ENCODE measurements at regions of chr19 and their contacts with region 1.

Region 1: DNA sequence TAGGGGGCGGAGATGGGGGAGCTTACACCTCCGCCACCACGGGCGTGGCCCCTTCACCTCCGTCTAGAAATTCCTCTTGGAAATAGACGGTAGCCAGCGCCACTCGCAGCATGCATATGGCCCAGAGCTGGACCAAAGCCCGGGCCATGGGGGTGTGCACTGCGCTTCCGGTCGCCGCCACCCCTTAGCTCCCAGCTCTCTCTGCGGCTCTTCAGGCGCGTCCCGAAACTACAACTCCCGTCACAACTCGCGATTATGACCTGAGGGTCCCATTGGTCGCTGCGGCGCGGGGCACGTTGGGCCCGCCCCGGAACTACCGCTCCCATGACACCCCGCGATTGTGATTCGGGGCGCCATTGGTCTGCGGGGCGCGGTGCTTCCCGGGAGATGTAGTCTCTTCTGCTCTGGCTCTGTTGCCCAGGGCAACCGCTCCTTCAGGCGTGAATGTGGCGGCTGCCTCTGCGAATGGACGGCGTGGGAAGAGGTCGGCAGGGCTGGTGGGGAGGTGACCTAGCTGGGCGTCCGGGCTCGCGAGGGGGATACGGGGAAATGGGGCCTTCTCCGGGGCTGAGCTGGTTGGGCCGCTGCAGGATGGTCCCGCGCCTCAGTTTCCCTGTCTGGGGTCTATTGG is at the starts of genes C19orf44 and CALR3:
- DNase-seq: peak; percentile 98 to 99
- ATAC-seq: peak; percentile 96 to 97
- H3K4me3 ChIP-seq: peak within 1 kb of the TSS; percentile 74 to 86 (median 80)
- H3K27ac ChIP-seq: peak within 1 kb of the TSS; percentile 84 to 94 (median 88)
- H3K4me1 ChIP-seq: peaks cover 4 to 10% of the 10 kb centered on the region in 2 donors
- H3K27me3 ChIP-seq: no peaks in the 10 kb centered on the region
- CTCF ChIP-seq: peak; percentile 20 to 49 (median 38)
- POLR2A ChIP-seq: peak; percentile 22 to 24
- total RNA-seq, gene C19orf44: 4.1 to 7.1 (median 5.0) TPM
- total RNA-seq, gene CALR3: not detected

Region 2: GRCh38 chr19:16435238-16435917 is 60.7 kb before region 1 on chr19:
- in situ Hi-C with region 1: loop called in 1 of 4 experiments (anchors 10 kb)
- intact Hi-C with region 1: no loop called
- DNase-seq: peak in 1 of 2 donors; percentile 66
- ATAC-seq: peak; percentile 28 to 81
- H3K4me3 ChIP-seq: no peak overlapping the region
- H3K27ac ChIP-seq: peak overlapping the region; percentile 66 to 95 (median 88)
- H3K4me1 ChIP-seq: peaks cover 29 to 36% of the 10 kb centered on the region in 2 donors
- H3K27me3 ChIP-seq: no peaks in the 10 kb centered on the region
- CTCF ChIP-seq: no peak
- POLR2A ChIP-seq: no peak

Region 3: GRCh38 chr19:16441661-16442162 is 54.4 kb before region 1 on chr19:
- in situ Hi-C with region 1: loop called in 1 of 4 experiments (anchors 10 kb)
- intact Hi-C with region 1: loop called (anchors 2 kb)
- DNase-seq: peak in 1 of 2 donors; percentile 64
- ATAC-seq: peak; percentile 24 to 31
- H3K4me3 ChIP-seq: peak overlapping the region in 1 of 4 donors; percentile 7
- H3K27ac ChIP-seq: peak overlapping the region; percentile 91 to 99 (median 96)
- H3K4me1 ChIP-seq: peaks cover 64 to 65% of the 10 kb centered on the region in 2 donors
- H3K27me3 ChIP-seq: no peaks in the 10 kb centered on the region
- CTCF ChIP-seq: peak in 4 of 5 experiments; percentile 51 to 78 (median 64)
- POLR2A ChIP-seq: no peak

Region 4: DNA sequence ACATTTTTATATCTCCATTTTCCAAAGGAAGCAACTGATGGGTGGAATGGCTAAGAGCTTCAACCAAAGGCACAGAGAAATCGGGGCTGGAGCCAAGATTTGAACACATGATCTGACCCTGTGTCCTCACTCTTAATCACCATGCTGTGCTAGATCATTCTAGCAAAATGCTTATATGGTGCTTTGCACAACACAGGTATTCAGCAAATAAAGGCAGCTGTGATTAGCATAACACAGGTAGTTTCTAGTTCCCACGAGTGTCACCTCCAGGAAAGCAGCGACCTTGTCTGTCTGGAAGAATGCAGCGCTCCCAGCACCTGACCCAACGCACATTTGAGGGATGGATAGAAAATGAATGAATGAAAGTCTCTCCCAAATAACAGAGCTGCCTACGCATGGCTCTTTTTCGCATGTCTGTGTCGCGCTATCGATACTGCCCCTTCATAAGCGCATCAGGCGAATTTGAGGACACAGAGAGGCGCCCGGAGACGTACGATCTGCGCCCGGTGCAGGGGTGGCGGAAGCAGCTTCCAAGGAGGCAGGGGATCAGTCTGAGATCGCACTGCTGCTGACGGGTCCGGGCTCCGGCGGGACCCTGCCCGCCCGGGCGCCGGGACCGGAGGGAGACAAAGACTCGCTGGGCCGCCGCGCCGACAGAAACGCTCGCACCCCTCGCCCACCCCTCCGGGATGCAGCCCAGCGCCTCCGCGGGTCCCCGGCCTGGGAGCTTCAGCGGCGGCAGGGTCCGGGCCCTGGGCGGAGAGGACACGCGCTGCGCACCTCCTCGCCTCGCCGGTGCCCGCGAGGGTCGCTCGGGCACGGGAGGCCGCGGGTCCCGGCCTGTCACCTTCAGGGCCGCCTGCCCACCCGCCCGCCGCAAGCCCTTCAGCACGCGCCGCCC is 24.9 kb before region 1 on chr19:
- in situ Hi-C with region 1: no loop called
- intact Hi-C with region 1: loop called (anchors 1 kb)
- DNase-seq: peak in 1 of 2 donors; percentile 67
- ATAC-seq: peak; percentile 28 to 44
- H3K4me3 ChIP-seq: peak overlapping the region; percentile 70 to 84 (median 77)
- H3K27ac ChIP-seq: peak overlapping the region; percentile 91 to 99 (median 96)
- H3K4me1 ChIP-seq: peaks cover 48 to 55% of the 10 kb centered on the region in 2 donors
- H3K27me3 ChIP-seq: no peaks in the 10 kb centered on the region
- CTCF ChIP-seq: no peak
- POLR2A ChIP-seq: peak; percentile 24 to 35

Region 5: DNA sequence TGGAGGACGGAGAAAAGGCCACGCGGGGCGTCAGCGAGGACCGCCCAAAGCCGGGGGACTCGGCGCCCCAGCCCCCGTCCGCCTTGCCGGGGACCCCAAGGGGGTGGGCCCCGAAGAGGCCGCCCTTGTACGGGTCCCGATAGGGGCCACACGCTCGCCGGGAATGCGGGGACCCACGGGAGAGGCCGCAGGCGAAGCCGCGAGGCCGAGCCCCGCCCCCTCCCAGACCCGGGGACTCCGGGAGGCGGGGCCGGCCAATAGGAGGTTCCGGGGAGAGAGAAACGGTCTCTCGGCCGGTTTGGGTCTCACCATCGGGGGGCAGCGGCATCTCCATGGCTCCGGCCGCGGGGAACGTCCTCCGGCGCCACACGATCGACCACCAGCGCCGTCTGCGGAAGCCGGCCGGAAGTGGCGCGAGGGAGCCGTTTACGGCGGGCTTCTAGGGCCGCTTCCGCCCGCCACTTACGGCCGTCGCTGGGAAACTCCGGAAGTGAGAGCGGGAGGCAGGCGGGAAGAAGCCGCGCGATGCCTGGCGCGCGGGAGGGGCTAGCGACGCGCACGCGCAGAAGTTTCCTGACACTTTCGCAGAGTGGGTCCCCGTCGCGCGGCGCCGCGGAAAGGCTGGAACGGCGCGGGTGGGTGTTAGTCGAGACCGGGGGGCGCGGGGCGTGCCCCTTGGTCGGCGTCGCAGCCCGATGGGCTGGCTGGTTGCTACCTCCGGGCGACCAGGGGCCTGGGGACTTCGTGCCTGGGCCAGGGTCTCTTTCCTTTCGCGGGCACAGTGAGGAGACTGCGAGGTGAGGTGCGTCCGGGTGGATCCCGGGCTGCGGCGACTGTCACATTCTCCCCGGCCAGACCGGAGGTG is 46.2 kb after region 1 on chr19 and contains the start of gene CHERP:
- in situ Hi-C with region 1: no loop called
- intact Hi-C with region 1: loop called (anchors 2 kb)
- DNase-seq: peak; percentile 87 to 90
- ATAC-seq: peak; percentile 96 to 97
- H3K4me3 ChIP-seq: peak within 1 kb of the TSS; percentile 85 to 96 (median 90)
- H3K27ac ChIP-seq: peak within 1 kb of the TSS; percentile 91 to 97 (median 92)
- H3K4me1 ChIP-seq: peaks cover 31 to 49% of the 10 kb centered on the region in 2 donors
- H3K27me3 ChIP-seq: no peaks in the 10 kb centered on the region
- CTCF ChIP-seq: peak in 2 of 5 experiments; percentile 25 to 26
- POLR2A ChIP-seq: peak; percentile 90 to 94
- total RNA-seq, gene CHERP: 7.4 to 12.1 (median 9.8) TPM

Region 6: GRCh38 chr19:16587833-16588823 is 92.0 kb after region 1 on chr19:
- in situ Hi-C with region 1: no loop called
- intact Hi-C with region 1: no loop called
- DNase-seq: peak; percentile 43 to 47
- ATAC-seq: peak; percentile 25 to 69
- H3K4me3 ChIP-seq: peak overlapping the region in 3 of 4 donors; percentile 24 to 41 (median 26)
- H3K27ac ChIP-seq: peak overlapping the region; percentile 47 to 80 (median 64)
- H3K4me1 ChIP-seq: peaks cover 76 to 97% of the 10 kb centered on the region in 2 donors
- H3K27me3 ChIP-seq: no peaks in the 10 kb centered on the region
- CTCF ChIP-seq: no peak
- POLR2A ChIP-seq: no peak

Region 7: DNA sequence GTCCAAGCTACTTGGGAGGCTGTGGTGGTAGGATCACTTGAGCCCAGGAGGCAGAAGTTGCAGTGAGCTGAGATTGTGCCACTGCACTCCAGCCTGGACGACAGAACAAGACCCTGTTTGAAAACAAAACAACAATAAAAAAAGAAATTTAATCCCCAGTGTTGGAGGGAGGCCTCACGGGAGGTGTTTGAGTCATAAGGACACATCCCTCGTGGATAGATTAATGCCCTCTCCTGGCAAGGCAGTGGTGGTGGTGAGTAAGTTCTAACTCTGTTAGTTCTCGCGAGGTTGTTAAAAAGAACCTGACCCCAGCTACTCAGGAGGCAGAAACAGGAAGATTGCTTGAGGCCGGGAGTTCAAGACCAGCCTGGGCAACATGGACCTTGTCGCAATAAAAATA is 305.5 kb after region 1 on chr19:
- in situ Hi-C with region 1: no loop called
- intact Hi-C with region 1: no loop called
- DNase-seq: no peak
- ATAC-seq: no peak
- H3K4me3 ChIP-seq: no peak overlapping the region
- H3K27ac ChIP-seq: no peak overlapping the region
- H3K4me1 ChIP-seq: no peaks in the 10 kb centered on the region
- H3K27me3 ChIP-seq: no peaks in the 10 kb centered on the region
- CTCF ChIP-seq: no peak
- POLR2A ChIP-seq: no peak

Measured in gastrocnemius medialis (tissue), 4 donors.